PC-9 (cell line): ENCODE measurements at regions of chr4 and their contacts with region 1.

Region 1: DNA sequence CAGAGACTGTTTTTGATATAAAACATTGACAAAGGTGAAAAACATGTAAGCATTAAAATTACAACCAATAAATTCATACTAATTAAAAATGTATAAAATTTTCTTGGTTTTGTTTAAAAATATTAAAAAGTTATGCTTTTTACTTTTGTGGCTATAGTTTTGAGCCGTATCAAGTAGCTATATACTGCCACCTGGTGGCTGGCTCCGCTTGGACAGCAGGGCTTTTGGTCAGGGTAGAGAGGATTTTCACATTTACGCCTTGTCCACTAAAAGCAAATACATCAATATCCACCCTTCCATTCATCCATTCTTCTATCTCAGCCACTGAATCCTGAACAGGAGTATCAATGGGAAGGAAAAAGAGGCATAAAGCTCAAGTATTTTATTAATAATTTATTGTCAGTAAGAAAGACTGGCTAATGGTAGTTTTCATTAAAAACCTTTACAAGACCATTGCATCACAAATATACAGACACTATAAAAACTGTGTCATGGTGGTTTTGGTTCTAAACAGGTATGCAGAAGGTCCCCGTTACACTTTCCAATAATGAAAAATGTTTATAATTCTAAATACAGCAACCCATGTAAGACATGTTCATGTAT is 32.1 kb upstream of the MTNR1A start:
- DNase-seq: peak in 1 of 2 experiments; percentile 51
- H3K4me3 ChIP-seq: no peak overlapping the region
- H3K27ac ChIP-seq: no peak overlapping the region
- H3K4me1 ChIP-seq: no peaks in the 10 kb centered on the region
- H3K27me3 ChIP-seq: no peaks in the 10 kb centered on the region
- CTCF ChIP-seq: peak; percentile 82

Region 2: DNA sequence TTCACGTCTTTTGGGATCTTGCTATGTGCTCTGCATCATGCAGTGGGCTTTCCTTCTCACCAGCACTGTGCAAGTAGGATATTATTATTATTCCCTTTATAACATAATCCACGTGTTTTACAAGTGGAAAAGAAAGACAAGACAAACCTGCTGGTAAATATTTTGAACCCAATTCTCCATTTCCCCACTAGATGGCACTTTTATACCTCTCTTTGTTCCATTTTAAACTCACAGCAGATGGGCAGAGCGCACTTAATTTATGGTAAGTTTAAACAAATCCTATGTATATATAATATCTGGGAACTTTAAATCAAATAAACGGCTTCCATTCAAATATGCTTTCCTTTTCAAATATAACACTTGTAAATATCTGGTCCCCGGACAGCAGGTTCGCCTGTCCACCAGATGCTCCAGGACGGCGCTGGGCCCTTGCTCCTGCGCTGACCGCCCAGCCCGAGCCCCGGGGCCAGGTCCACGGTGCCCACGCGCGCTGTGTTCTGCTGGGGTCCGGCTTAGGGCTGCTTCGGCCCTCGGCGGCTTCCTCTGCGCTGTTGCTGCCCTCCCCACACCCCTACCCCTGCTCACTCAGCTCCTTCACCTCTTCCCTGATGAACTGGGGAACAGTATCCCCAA is 290.4 kb before region 1 on chr4:
- CTCF ChIA-PET with region 1: no interaction called
- POLR2A ChIA-PET with region 1: no interaction called
- intact Hi-C with region 1: loop called (anchors 1 kb)
- DNase-seq: no peak
- H3K4me3 ChIP-seq: no peak overlapping the region
- H3K27ac ChIP-seq: no peak overlapping the region
- H3K4me1 ChIP-seq: no peaks in the 10 kb centered on the region
- H3K27me3 ChIP-seq: peaks cover 14% of the 10 kb centered on the region
- CTCF ChIP-seq: peak; percentile 67

Region 3: DNA sequence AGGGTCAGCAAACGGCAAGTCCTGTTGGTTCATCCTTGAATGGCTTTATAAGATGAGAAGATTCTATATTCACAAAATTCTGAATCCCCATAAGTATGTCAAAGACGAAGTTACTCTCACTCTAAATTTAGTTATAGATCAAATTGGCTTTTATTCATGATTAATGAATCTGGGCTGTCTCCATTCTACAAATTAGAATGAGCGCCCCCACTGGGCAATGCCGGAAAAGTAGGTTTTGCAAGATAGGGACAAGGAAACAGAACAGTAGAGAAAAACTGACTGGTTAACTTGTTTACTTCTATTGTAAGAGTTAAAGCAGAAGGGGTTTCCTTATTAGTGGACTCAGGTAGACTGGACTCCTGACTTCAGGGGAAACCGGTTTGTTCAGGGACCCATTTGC is 221.2 kb before region 1 on chr4:
- CTCF ChIA-PET with region 1: no interaction called
- POLR2A ChIA-PET with region 1: no interaction called
- intact Hi-C with region 1: loop called (anchors 2 kb)
- DNase-seq: no peak
- H3K4me3 ChIP-seq: no peak overlapping the region
- H3K27ac ChIP-seq: no peak overlapping the region
- H3K4me1 ChIP-seq: no peaks in the 10 kb centered on the region
- H3K27me3 ChIP-seq: no peaks in the 10 kb centered on the region
- CTCF ChIP-seq: no peak; the same call in 1 of the 2 replicates

Region 4: GRCh38 chr4:186472948-186473347 is 114.6 kb before region 1 on chr4:
- CTCF ChIA-PET with region 1: no interaction called
- POLR2A ChIA-PET with region 1: no interaction called
- intact Hi-C with region 1: loop called (anchors 5 kb)
- DNase-seq: no peak
- H3K4me3 ChIP-seq: no peak overlapping the region
- H3K27ac ChIP-seq: no peak overlapping the region
- H3K4me1 ChIP-seq: no peaks in the 10 kb centered on the region
- H3K27me3 ChIP-seq: no peaks in the 10 kb centered on the region
- CTCF ChIP-seq: peak; percentile 62

Region 5: GRCh38 chr4:186606593-186606992 is 19.1 kb after region 1 on chr4:
- CTCF ChIA-PET with region 1: no interaction called
- POLR2A ChIA-PET with region 1: no interaction called
- intact Hi-C with region 1: no loop called
- DNase-seq: no peak
- H3K4me3 ChIP-seq: no peak overlapping the region
- H3K27ac ChIP-seq: no peak overlapping the region
- H3K4me1 ChIP-seq: no peaks in the 10 kb centered on the region
- H3K27me3 ChIP-seq: no peaks in the 10 kb centered on the region
- CTCF ChIP-seq: no peak

Region 6: DNA sequence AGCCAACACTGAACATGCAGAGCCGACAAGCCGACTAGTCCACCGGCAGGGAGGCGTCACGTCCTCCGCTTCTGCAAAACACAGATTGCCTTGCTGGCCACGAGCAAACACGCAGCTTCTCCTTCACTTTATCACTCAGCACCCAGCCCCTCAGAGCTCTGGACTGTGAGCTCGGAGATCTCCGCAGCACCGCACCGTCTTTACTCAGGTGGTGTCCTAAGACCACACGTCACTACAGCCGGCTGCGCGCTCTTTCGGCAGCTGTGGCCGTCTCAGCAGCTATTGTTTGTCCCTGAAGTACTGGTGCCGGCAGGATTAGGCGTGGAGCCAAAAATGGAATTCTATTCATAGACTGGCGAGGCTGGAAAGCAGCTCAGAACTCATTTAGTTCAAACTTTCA is 64.1 kb after region 1 on chr4:
- CTCF ChIA-PET with region 1: no interaction called
- POLR2A ChIA-PET with region 1: no interaction called
- intact Hi-C with region 1: no loop called
- DNase-seq: no peak
- H3K4me3 ChIP-seq: no peak overlapping the region
- H3K27ac ChIP-seq: no peak overlapping the region
- H3K4me1 ChIP-seq: no peaks in the 10 kb centered on the region
- H3K27me3 ChIP-seq: no peaks in the 10 kb centered on the region
- CTCF ChIP-seq: no peak